ENCODE measurements at regions of chr7 and their contacts with region 1.

Region 1: DNA sequence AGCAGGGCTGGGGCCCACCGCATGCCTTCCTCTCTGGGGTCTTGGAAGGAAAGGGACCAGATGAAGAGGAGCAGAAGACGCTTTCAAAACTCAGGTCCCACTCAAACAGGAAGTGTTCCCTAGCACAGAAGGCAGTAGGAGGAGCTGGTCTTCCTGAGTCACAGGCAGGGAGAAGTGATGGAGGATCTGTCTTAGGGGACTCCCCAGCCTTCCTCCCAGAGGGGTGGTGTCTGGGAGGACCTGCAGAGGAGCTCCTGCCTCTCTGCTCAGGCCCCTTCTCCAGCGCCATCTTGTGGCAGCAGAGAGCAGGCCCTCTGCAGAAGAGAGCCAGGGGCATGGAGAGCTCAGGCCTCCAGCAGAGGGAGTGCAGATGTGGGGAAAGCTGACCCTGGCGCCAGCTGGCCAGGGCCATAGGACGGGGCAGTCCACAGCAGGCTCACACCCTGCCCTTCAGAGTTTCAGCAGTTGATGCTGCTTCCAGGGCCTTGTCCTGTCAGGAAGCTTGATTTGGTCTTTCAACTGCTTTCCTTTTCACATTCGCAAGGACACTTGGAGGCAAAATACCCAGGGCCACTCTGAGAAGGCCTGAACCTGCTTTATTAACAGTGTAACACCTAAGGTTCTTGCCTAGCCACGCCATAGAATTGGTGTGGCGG is 62.2 kb upstream of the TARP start:
- DNase-seq: peak; percentile 93
- ATAC-seq: peak; percentile 75
- H3K4me3 Mint-ChIP-seq: peak overlapping the region; percentile 81
- H3K27ac Mint-ChIP-seq: peak overlapping the region; percentile 91
- H3K4me1 Mint-ChIP-seq: peaks cover 45% of the 10 kb centered on the region
- H3K27me3 Mint-ChIP-seq: no peaks in the 10 kb centered on the region

Region 2: GRCh38 chr7:38215735-38216670 is 119.6 kb before region 1 on chr7:
- CTCF ChIA-PET with region 1: interaction called, 157 read pairs
- DNase-seq: peak; percentile 90
- ATAC-seq: peak; percentile 65
- H3K4me3 Mint-ChIP-seq: peak overlapping the region; percentile 34
- H3K27ac Mint-ChIP-seq: peak overlapping the region; percentile 91
- H3K4me1 Mint-ChIP-seq: peaks cover 55% of the 10 kb centered on the region
- H3K27me3 Mint-ChIP-seq: no peaks in the 10 kb centered on the region

Region 3: GRCh38 chr7:38222481-38223096 is 113.0 kb before region 1 on chr7:
- CTCF ChIA-PET with region 1: interaction called, 157 read pairs
- DNase-seq: no peak
- ATAC-seq: peak; percentile 32
- H3K4me3 Mint-ChIP-seq: no peak overlapping the region
- H3K27ac Mint-ChIP-seq: peak overlapping the region; percentile 74
- H3K4me1 Mint-ChIP-seq: peaks cover 80% of the 10 kb centered on the region
- H3K27me3 Mint-ChIP-seq: no peaks in the 10 kb centered on the region

Region 4: DNA sequence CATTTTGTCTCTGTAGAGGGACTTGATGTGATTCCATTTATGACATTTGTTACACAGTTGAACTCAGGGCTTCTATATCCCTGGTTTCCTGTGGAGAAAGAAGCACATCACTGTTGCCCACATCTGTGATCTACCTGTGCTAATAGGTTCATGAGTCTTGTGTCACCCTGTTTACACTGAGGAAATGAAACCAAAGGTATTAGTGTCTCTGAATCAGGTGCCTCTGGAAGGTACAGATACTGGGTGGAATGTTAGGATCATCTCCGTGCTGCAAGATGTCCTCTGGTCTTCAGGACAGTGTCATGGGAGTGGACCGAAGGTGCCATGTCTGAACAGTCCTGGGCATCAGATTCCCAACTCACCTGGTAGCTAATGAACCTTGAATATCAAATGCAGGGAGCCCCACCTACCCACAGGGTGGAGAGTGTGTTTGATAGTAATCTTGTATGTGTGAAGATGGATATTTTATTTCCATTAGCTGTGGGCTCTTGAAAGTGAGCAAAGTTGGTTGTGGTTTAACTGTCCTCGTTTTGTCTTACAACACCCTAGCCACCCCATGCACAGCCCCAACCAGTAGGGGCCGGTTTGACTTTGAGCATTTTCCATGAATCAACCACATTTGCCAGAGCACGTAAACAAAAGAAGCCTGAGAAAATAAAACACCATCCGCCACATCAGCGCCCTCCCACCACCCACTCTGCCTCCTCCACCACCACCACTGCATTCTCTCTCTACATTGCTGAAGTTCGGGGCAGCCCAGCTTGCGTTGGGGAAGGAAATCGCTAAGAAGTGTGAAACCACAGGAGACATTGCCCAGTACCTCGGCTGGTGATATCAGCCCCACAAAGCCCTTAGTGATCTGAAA is 102.9 kb before region 1 on chr7:
- CTCF ChIA-PET with region 1: interaction called, 38 read pairs
- DNase-seq: peak; percentile 95
- ATAC-seq: peak; percentile 80
- H3K4me3 Mint-ChIP-seq: peak overlapping the region; percentile 55
- H3K27ac Mint-ChIP-seq: peak overlapping the region; percentile 96
- H3K4me1 Mint-ChIP-seq: peaks cover 91% of the 10 kb centered on the region
- H3K27me3 Mint-ChIP-seq: no peaks in the 10 kb centered on the region

Region 5: DNA sequence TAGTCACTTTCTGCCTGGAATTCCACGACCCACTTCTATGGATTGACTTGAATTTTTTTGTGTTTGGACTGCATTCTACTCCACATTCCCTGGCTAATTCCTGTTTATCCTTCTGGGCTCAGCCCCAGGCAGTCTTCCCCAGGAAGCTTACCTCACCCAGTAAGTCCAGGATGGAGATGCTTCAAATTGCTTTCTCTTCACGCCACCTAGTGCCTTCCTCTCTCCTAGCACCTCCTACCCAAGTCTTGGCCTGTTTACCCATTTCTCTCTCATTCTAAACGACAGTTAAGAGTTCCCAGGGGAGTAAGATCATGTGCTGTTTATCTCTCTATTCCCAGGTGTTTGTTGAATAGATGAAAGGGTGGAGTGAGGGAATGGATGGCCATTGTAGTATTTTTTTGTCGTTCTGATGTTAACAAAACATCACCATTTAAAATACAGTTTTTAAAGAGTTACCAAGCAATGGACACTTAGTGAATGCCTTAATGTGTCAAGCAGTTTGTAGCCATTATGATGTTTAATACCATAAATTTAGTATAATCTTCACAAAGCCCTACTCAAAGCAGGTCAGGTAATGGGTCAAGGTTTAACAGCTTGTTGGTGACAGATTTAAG is 16.7 kb before region 1 on chr7:
- CTCF ChIA-PET with region 1: interaction called, 47 read pairs
- DNase-seq: peak; percentile 58
- ATAC-seq: peak; percentile 52
- H3K4me3 Mint-ChIP-seq: peak overlapping the region; percentile 77
- H3K27ac Mint-ChIP-seq: peak overlapping the region; percentile 97
- H3K4me1 Mint-ChIP-seq: peaks cover 42% of the 10 kb centered on the region
- H3K27me3 Mint-ChIP-seq: no peaks in the 10 kb centered on the region

Region 6: GRCh38 chr7:38351601-38352000 is 16.0 kb after region 1 on chr7:
- CTCF ChIA-PET with region 1: interaction called, 11 read pairs
- DNase-seq: no peak
- ATAC-seq: no peak
- H3K4me3 Mint-ChIP-seq: no peak overlapping the region
- H3K27ac Mint-ChIP-seq: no peak overlapping the region
- H3K4me1 Mint-ChIP-seq: peaks cover 3% of the 10 kb centered on the region
- H3K27me3 Mint-ChIP-seq: no peaks in the 10 kb centered on the region

Region 7: DNA sequence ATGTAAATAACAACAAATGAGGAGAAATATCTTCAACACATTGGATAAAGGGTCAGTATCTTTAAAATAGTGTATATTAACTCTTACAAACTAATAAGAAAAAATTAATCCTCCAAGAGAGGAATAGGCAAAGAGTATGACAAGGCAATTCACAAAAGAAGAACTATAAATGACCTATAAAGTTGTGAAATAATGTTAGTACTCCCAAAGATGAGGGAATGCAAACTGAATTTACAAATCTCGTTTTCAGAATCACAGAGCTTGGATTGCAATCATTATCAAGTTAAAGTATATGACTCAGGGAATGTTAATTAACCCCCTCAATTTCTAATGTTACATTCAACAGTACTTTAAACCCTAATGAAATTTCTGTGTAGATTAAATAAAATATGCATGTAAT is 25.2 kb after region 1 on chr7:
- CTCF ChIA-PET with region 1: interaction called, 63 read pairs
- DNase-seq: no peak
- ATAC-seq: no peak
- H3K4me3 Mint-ChIP-seq: peak overlapping the region; percentile 99
- H3K27ac Mint-ChIP-seq: peak overlapping the region; percentile 95
- H3K4me1 Mint-ChIP-seq: peaks cover 26% of the 10 kb centered on the region
- H3K27me3 Mint-ChIP-seq: no peaks in the 10 kb centered on the region

Region 8: DNA sequence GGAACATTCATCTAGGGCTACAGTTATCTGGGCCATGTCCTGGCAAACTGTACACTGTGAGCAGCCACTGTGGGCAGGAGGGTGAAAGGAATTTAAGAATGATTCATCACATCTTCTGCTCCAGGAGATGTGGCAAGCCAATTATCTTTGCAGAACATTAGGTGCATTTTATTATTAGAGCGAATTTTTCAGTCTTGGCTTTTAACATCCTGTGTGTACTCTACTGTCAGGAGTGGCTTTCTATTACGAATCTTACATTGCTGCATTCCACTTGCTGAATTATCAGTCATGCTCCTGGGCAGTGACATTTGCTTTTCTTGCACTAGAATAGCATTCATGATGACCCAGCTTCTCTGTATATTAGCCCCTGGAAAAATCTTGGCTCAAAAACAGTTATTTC is 47.1 kb after region 1 on chr7:
- CTCF ChIA-PET with region 1: no interaction called
- DNase-seq: no peak
- ATAC-seq: no peak
- H3K4me3 Mint-ChIP-seq: no peak overlapping the region
- H3K27ac Mint-ChIP-seq: no peak overlapping the region
- H3K4me1 Mint-ChIP-seq: peaks cover 11% of the 10 kb centered on the region
- H3K27me3 Mint-ChIP-seq: no peaks in the 10 kb centered on the region

Region 9: GRCh38 chr7:38398725-38399321 is 63.2 kb after region 1 on chr7:
- CTCF ChIA-PET with region 1: no interaction called
- DNase-seq: peak; percentile 52
- ATAC-seq: no peak
- H3K4me3 Mint-ChIP-seq: no peak overlapping the region
- H3K27ac Mint-ChIP-seq: no peak overlapping the region
- H3K4me1 Mint-ChIP-seq: peaks cover 2% of the 10 kb centered on the region
- H3K27me3 Mint-ChIP-seq: peaks cover 3% of the 10 kb centered on the region

Region 10: DNA sequence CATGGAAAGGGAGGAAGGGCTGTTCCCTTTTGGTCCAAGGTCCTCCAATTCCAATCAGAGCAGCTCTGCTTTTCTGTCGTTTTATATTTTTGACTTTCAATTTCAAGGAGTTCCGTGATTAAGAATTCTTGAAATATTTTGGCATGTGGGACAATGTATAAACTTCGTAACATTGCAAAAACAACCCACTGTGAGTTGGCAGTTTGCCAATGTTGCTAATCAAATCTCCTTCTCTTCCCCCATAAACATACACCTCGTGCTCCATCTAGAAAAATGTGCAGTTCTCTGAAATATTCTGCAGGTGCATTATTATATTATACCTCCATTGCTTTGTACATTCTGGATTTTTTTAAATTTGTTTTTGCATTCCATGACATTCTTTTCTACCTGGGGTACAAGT is 691.9 kb after region 1 on chr7:
- CTCF ChIA-PET with region 1: no interaction called
- DNase-seq: no peak
- ATAC-seq: no peak
- H3K4me3 Mint-ChIP-seq: no peak overlapping the region
- H3K27ac Mint-ChIP-seq: no peak overlapping the region
- H3K4me1 Mint-ChIP-seq: no peaks in the 10 kb centered on the region
- H3K27me3 Mint-ChIP-seq: no peaks in the 10 kb centered on the region